ENCODE measurements at regions of chr7 and their contacts with region 1.

Region 1: DNA sequence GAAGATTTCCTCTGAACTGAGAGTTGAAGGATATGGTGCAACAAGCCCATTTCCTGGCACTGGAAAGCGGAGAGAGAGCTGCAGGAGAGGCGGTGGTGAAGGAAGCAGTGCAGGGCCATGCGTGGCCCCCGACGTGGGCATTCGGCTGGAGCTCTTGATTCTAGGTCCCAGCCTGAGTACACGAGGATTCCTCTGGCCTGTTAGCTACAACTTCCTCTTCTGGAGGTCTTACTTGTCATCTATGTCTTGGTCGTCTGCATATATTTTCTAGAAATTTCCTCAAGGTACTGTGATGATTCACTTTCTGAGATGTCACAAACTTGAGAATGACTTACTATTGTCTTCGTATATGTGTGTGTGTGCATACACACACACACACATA is 59.2 kb upstream of the JAZF1 start:
- DNase-seq: peak; percentile 81 to 92 (median 82)
- H3K4me3 ChIP-seq: peak overlapping the region in 2 of 3 experiments; percentile 4 to 54
- H3K4me3 Mint-ChIP-seq: peak overlapping the region; percentile 65 to 81
- H3K27ac ChIP-seq: peak overlapping the region; percentile 85
- H3K27ac Mint-ChIP-seq: peak overlapping the region; percentile 83 to 98 (median 96)
- H3K4me1 ChIP-seq: peaks cover 61 to 67% of the 10 kb centered on the region in 2 donors
- H3K4me1 Mint-ChIP-seq: peaks cover 66% of the 10 kb centered on the region
- H3K27me3 ChIP-seq: no peaks in the 10 kb centered on the region
- H3K27me3 Mint-ChIP-seq: no peaks in the 10 kb centered on the region
- CTCF ChIP-seq: no peak

Region 2: DNA sequence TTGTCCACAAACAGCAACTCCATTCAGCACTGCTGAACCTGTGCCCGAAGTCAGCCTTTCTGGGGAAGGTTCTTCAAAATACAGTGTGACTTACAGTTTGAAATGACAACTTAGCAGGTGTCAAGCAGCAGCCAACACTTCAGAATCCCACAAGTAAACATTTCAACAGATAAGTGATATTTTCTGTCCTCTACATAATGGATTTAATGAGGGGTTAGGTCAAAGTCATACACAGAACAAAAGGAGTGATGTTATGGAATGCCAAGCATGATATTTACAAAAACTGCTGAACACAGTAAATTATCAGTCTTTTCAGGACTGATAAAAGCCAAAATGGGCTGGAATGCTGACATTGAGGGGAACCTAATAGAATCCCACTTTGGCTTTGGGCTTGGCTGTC is 18.4 kb after region 1 on chr7:
- intact Hi-C with region 1: loop called in 1 of 2 experiments (anchors 2 kb)
- DNase-seq: no peak
- H3K4me3 ChIP-seq: no peak overlapping the region
- H3K4me3 Mint-ChIP-seq: no peak overlapping the region
- H3K27ac ChIP-seq: no peak overlapping the region
- H3K27ac Mint-ChIP-seq: peak overlapping the region in 1 of 7 donors; percentile 42
- H3K4me1 ChIP-seq: peaks cover 4 to 6% of the 10 kb centered on the region in 2 donors
- H3K4me1 Mint-ChIP-seq: peaks cover 6% of the 10 kb centered on the region
- H3K27me3 ChIP-seq: no peaks in the 10 kb centered on the region
- H3K27me3 Mint-ChIP-seq: peaks cover 0 to 4% (median 2%) of the 10 kb centered on the region in 3 donors
- CTCF ChIP-seq: no peak

Region 3: GRCh38 chr7:28354601-28355402 is 115.0 kb after region 1 on chr7:
- intact Hi-C with region 1: no loop called
- DNase-seq: no peak
- H3K4me3 ChIP-seq: no peak overlapping the region
- H3K4me3 Mint-ChIP-seq: no peak overlapping the region
- H3K27ac ChIP-seq: no peak overlapping the region
- H3K27ac Mint-ChIP-seq: no peak overlapping the region
- H3K4me1 ChIP-seq: no peaks in the 10 kb centered on the region
- H3K4me1 Mint-ChIP-seq: no peaks in the 10 kb centered on the region
- H3K27me3 ChIP-seq: no peaks in the 10 kb centered on the region
- H3K27me3 Mint-ChIP-seq: peaks cover 3 to 6% (median 3%) of the 10 kb centered on the region in 3 donors
- CTCF ChIP-seq: no peak